ENCODE measurements at regions of chr12 and their contacts with region 1.

Region 1: DNA sequence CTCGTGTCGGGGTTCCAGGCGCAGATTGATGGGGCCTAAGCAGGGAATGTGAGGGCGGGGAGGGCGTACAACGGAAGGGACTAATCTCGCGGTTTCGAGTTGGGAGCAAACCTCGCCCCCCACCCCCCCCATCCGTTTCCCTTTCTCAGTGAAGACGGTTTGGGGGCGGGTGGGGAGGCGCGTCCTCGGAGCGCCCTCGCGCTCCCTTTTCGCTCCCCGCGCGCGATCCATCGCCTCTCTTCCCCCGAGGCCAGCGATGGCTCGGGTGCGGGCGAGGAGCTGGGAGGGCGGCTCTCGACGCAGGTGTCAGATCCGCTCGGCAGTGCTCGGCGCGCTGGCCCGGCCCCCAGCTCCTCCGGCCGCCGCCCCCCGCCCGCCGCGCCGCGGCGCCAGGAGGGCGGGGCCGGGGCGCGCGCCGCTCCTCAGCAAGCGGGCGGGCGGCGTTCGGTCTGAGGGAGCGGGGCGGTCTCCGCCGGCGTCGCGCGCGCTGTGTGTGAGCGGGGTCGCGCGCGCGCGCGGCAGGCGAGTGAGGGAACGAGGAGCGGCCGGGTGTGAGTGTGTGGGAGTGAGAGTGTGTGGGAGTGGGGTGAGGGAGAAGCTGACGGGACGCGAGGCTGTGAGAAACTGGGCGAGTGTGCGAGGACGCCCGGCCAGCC is at the start of gene RIMKLB:
- DNase-seq: peak; percentile 92
- H3K4me3 ChIP-seq: peak within 1 kb of the TSS; percentile 88
- H3K27ac ChIP-seq: peak within 1 kb of the TSS; percentile 69
- H3K4me1 ChIP-seq: peaks cover 11% of the 10 kb centered on the region; the same call in 1 of the 2 replicates
- H3K27me3 ChIP-seq: no peaks in the 10 kb centered on the region
- total RNA-seq, gene RIMKLB: 21.9 and 23.2 TPM in 2 replicates

Region 2: GRCh38 chr12:9039397-9039977 is 341.9 kb after region 1 on chr12:
- in situ Hi-C with region 1: loop called (anchors 25 kb)
- DNase-seq: peak; percentile 69
- H3K4me3 ChIP-seq: no peak overlapping the region
- H3K27ac ChIP-seq: no peak overlapping the region
- H3K4me1 ChIP-seq: no peaks in the 10 kb centered on the region
- H3K27me3 ChIP-seq: no peaks in the 10 kb centered on the region; the same call in none of the 2 replicates